ENCODE measurements at regions of chr16 and their contacts with region 1.

Region 1: DNA sequence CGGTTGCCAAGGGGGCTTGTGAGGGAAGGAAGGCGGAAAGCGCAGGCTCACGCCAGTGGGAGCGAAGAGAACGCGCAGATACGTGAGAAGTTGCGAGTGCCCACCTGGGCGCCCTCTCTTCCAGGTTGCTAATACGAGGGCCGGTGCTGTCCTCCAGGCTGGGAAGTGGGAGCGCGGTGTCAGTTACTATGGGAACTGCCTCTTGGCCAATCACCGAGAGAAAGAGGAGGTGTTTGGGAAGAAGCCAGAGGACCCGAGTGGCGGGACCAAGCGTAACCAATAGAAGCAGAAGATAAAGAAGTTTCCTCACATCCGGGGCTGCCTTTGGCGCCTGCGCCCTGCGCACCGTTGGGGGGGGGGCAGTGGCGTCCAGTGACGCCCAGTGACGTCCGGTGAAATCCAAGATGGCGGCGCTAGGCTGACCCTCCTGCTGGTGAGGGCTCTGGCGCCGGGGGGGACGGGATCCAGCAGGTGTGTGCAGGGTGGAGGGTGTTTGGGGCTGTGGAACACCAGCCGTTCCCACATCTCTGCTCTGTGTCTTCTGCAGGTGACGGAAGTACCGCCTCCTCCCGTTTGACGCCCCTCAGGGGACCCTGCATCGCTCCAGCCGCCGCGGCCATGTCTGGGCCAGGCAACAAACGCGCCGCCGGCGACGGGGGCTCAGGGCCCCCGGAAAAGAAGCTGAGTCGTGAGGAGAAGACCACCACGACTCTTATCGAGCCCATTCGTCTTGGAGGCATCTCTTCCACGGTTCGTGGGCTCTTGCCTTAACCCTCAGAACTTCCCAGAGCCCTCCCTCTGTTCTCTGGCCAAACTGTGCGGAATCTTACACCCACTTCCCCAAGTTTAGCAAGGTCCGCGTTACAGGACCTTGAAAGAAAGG is at the starts of genes CFAP119 and RNF40:
- DNase-seq: peak; percentile 96
- ATAC-seq: peak; percentile 90
- H3K4me3 ChIP-seq: peak within 1 kb of the TSS; percentile 82
- H3K27ac ChIP-seq: peak within 1 kb of the TSS; percentile 27
- H3K4me1 ChIP-seq: peaks cover 20% of the 10 kb centered on the region
- H3K27me3 ChIP-seq: no peaks in the 10 kb centered on the region
- CTCF ChIP-seq: no peak
- total RNA-seq, gene CFAP119: 8.6 and 9.6 TPM in 2 replicates
- total RNA-seq, gene RNF40: 64.1 and 80.2 TPM in 2 replicates

Region 2: DNA sequence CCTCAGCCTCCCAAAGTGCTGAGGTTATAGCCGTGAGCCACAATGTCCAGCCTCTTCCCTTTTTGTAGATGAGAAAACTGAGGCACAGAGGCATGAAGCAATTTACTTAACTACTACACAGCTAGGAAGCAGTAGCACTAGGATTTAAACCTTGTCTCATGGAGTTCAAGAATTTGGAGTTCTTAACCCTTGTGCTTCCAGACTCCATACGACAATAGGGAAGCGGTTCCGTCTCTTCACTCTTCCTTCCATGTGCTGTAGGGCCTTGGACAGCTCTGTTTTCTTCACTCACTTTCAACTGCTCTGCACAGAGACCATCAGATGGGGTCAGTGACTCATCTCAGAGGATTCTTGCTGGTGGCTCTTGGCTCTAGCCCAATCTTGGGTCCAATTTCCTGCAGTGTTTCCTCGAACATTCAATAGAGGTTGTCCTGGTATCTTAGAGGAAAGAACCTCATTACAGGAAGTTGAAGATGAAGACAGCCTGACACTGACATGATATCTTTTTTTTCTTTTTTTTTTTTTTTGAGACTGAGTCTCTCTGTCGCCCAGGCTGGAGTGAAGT is 270.3 kb before region 1 on chr16:
- CTCF ChIA-PET with region 1: no interaction called
- POLR2A ChIA-PET with region 1: no interaction called
- intact Hi-C with region 1: no loop called
- DNase-seq: peak; percentile 79
- ATAC-seq: peak; percentile 79
- H3K4me3 ChIP-seq: no peak overlapping the region
- H3K27ac ChIP-seq: no peak overlapping the region
- H3K4me1 ChIP-seq: peaks cover 6% of the 10 kb centered on the region
- H3K27me3 ChIP-seq: no peaks in the 10 kb centered on the region
- CTCF ChIP-seq: no peak

Region 3: DNA sequence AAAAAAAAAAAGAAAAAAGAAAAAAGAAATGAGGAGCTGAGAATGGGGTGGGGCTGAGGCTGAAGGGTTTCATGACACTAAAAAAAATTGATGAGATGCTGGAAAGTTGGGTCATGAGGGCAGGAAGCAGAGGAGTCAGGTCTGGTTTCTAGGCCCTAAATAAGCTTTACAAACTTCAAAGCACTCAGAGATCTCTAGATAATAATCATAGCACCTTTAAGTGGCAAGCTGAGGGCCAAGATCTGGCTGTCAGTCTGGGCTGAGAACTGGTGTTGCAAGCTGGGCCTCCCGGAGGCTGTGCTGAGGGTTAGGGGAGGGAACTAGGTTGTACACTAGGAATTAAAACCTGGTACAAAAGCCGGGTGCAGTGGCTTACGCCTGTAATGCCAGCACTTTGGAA is 210.4 kb before region 1 on chr16:
- CTCF ChIA-PET with region 1: no interaction called
- POLR2A ChIA-PET with region 1: no interaction called
- intact Hi-C with region 1: no loop called
- DNase-seq: no peak
- ATAC-seq: no peak
- H3K4me3 ChIP-seq: no peak overlapping the region
- H3K27ac ChIP-seq: no peak overlapping the region
- H3K4me1 ChIP-seq: peaks cover 3% of the 10 kb centered on the region; the same call in 1 of the 2 replicates
- H3K27me3 ChIP-seq: no peaks in the 10 kb centered on the region
- CTCF ChIP-seq: no peak

Region 4: GRCh38 chr16:30637942-30638341 is 124.2 kb before region 1 on chr16:
- CTCF ChIA-PET with region 1: no interaction called
- POLR2A ChIA-PET with region 1: no interaction called
- intact Hi-C with region 1: no loop called
- DNase-seq: peak; percentile 74
- ATAC-seq: peak; percentile 58
- H3K4me3 ChIP-seq: no peak overlapping the region
- H3K27ac ChIP-seq: no peak overlapping the region
- H3K4me1 ChIP-seq: no peaks in the 10 kb centered on the region; the same call in 1 of the 2 replicates
- H3K27me3 ChIP-seq: no peaks in the 10 kb centered on the region
- CTCF ChIP-seq: peak; percentile 69

Region 5: DNA sequence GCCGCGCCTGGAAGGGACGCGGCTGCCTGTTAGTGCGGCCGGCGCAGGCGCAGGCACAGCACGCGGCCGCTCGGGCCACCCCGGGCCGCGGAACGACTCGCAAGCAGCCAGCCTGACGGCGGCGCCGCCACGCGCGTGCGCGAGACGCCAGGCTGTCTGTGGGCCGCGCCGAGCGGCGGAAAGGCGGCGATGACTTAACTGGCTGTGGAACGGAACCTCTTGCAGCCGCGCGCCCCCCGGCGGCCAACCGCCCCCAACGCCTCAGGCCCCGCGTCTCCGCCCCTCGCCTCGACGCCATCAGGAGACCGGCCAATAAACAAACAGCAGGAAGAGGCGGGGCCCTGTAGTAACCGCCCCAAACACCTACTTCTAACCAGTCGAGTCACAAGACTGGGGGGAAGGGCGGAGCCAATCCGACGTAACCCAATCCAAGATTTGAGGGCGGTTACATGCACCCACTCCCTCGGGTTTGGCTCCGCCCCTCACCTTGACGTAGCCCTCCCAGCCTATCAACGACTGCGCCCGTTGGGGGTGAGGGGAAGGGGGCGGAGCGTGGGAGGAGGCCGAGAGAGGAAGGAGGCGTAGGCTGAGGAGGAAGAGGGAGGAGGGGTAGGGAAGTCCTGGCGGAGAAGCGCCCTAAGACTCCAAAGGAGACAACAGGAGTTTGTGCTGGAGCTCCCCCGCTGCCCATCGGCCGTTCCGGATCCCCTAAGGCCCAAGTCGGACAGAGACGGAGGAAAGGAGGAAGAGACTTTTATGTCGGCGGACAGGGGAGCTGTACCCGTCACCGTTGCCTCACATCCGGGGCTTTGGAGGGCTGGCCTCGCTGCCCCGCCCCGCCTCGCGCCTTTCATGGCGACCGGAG is 104.1 kb before region 1 on chr16 and contains the start of gene FBRS:
- CTCF ChIA-PET with region 1: no interaction called
- POLR2A ChIA-PET with region 1: no interaction called
- intact Hi-C with region 1: loop called (anchors 5 kb)
- DNase-seq: peak; percentile 99
- ATAC-seq: peak; percentile 72
- H3K4me3 ChIP-seq: peak within 1 kb of the TSS; percentile 94
- H3K27ac ChIP-seq: peak within 1 kb of the TSS; percentile 96
- H3K4me1 ChIP-seq: peaks cover 23% of the 10 kb centered on the region
- H3K27me3 ChIP-seq: no peaks in the 10 kb centered on the region
- CTCF ChIP-seq: peak; percentile 62
- total RNA-seq, gene FBRS: 22.2 and 35.0 TPM in 2 replicates

Region 6: DNA sequence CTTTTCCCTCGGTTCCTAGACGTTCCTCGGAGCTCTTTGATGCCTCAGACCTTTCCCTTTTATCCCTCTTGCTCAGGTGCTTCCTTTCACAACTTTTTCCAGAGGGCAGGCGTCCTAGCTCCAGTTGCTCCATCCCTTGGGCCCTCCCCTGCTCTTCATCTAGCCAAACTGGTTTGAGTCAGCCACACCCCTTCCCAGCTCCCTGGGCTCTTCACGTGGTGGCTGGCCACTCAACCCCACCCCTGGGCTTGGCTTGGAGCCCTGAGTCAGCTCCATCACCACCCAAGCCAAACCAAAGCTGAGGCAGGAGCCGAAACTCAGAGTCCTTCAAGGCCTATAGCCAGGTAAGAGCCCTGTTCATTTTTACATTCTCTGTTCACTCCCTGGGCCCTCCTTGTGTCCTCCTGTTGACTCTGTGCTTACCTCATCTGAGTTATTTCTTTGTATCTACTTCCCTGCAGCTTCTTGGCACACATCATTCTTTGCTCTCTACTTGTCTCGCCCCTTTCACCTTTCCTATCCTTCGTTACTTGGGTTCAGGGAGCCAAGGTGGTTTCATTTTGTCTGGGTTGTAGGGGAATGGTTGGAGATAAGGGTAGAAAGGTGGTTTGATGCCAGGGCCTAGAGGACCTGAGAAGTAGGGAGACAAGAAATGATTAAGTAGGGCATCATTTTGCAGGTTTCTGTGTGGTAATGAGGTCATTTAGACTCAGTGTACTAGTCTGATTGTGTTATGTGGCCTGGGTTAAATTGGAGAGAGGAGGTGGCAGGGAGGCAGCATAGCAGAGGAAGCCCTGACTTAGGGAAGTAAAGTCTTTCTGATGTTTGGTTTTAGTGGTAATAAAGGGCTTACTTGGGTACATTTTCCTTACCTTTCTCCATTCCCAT is 21.6 kb before region 1 on chr16:
- CTCF ChIA-PET with region 1: no interaction called
- POLR2A ChIA-PET with region 1: no interaction called
- intact Hi-C with region 1: loop called (anchors 2 kb)
- DNase-seq: peak; percentile 95
- ATAC-seq: peak; percentile 79
- H3K4me3 ChIP-seq: peak overlapping the region; percentile 68
- H3K27ac ChIP-seq: peak overlapping the region; percentile 99
- H3K4me1 ChIP-seq: peaks cover 36% of the 10 kb centered on the region
- H3K27me3 ChIP-seq: no peaks in the 10 kb centered on the region
- CTCF ChIP-seq: no peak

Region 7: GRCh38 chr16:30997000-30997886 is 235.1 kb after region 1 on chr16:
- CTCF ChIA-PET with region 1: interaction called, 13 read pairs
- POLR2A ChIA-PET with region 1: no interaction called
- intact Hi-C with region 1: no loop called
- DNase-seq: peak; percentile 68
- ATAC-seq: peak; percentile 80
- H3K4me3 ChIP-seq: peak overlapping the region; percentile 83
- H3K27ac ChIP-seq: peak overlapping the region; percentile 86
- H3K4me1 ChIP-seq: peaks cover 31% of the 10 kb centered on the region
- H3K27me3 ChIP-seq: no peaks in the 10 kb centered on the region
- CTCF ChIP-seq: no peak

Region 8: DNA sequence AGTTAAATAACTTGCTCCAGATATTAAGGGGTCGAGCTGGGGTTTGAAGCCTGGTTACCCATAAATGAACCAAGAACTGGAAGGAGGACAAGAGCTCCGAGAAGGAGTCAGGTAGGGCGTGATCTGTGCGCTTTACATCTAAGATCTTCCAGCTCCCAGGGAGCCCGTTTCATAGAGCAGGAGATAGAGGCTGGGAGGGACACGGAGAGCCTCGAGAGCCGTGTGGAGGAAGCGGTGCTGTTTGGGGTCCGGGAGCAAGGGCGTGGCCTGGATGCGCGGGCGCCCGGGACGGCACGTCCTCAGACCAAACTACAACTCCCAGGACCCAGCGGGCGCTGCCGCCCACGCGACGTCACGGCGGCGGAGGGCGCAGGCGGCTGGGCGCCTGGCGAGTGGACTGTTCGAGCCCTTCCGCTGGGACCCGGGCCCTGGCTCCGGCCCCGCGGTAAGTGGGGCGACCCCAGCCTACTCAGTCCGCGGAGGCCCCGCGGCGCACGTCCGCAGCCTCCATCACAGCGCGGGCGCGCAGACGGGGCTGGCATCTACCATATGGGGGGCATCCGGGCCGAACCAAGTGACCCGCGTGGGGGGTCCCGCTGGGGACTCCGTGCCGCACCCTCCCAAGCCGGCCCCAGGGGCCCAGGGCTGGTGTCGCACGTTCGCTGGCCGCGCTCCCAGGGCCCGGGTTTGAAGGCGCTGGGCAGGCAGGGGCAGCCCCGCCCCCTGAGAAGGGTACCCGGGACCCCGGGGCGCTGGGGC is 346.0 kb after region 1 on chr16 and contains the start of gene BCKDK:
- CTCF ChIA-PET with region 1: no interaction called
- POLR2A ChIA-PET with region 1: no interaction called
- intact Hi-C with region 1: no loop called
- DNase-seq: peak; percentile 65
- ATAC-seq: peak; percentile 94
- H3K4me3 ChIP-seq: peak within 1 kb of the TSS; percentile 86
- H3K27ac ChIP-seq: no peak within 1 kb of the TSS
- H3K4me1 ChIP-seq: peaks cover 17% of the 10 kb centered on the region
- H3K27me3 ChIP-seq: no peaks in the 10 kb centered on the region
- CTCF ChIP-seq: no peak
- total RNA-seq, gene BCKDK: 47.7 and 69.1 TPM in 2 replicates

Measured in PC-3 (cell line).